H1 (cell line): ENCODE measurements at regions of chr12 and their contacts with region 1.

Region 1: DNA sequence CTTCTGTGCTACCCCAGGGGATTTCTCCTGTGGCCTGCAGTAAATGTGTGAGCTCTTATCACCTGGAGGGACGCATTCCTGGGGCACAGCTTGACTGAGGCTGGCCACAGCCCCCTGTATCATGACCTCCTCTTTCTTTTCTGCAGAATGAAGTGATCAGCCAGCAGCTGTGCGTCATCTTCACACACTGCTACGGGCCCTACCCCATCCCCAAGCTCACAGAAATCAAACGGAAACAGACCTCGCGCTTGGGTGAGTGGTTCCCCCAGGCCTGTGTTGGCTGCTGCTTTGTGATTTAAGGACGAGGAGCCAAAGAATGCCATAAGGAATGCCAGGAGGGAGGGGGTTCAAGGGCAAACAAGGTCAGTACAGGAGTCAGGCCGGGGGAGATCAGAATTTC is 50.5 kb upstream of the PWP1 start:
- DNase-seq: peak; percentile 61 to 72
- H3K4me3 ChIP-seq: peak overlapping the region in 1 of 4 experiments; percentile 36; a peak in 2 of 8 replicates
- H3K27ac ChIP-seq: peak overlapping the region; percentile 70
- H3K4me1 ChIP-seq: peaks cover 6 to 20% (median 18%) of the 10 kb centered on the region in 4 experiments
- H3K27me3 ChIP-seq: no peaks in the 10 kb centered on the region
- CTCF ChIP-seq: no peak
- EP300 ChIP-seq: peak in 1 of 2 experiments; percentile 17; a peak in 1 of 3 replicates
- POLR2A ChIP-seq: peak; percentile 56 to 83
- RAD21 ChIP-seq: no peak

Region 2: DNA sequence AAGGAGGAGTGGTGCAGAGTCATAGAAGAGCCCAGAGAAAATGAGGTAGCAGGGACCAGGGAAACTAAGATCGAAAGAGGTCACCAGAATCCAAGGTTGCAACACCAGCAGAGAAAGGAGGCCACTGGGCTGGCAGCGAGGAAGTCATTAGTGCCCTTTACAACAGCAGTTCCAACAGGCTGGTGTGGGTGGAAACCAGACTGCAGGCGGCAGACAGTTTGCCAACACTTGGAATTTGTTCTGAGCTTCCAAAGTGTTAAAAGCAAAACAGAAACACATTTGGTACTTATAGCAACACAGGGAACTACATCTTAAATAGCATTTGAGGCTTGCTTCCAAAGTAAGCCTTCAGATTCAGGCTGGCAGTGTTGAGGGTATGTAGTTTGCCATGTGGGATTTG is 44.7 kb before region 1 on chr12:
- CTCF ChIA-PET with region 1: no interaction called
- POLR2A ChIA-PET with region 1: no interaction called
- DNase-seq: no peak
- H3K4me3 ChIP-seq: no peak overlapping the region
- H3K27ac ChIP-seq: no peak overlapping the region
- H3K4me1 ChIP-seq: peaks cover 1 to 5% (median 3%) of the 10 kb centered on the region in 4 experiments; a peak in 4 of 7 replicates
- H3K27me3 ChIP-seq: no peaks in the 10 kb centered on the region
- CTCF ChIP-seq: no peak
- EP300 ChIP-seq: no peak
- POLR2A ChIP-seq: no peak
- RAD21 ChIP-seq: no peak

Region 3: DNA sequence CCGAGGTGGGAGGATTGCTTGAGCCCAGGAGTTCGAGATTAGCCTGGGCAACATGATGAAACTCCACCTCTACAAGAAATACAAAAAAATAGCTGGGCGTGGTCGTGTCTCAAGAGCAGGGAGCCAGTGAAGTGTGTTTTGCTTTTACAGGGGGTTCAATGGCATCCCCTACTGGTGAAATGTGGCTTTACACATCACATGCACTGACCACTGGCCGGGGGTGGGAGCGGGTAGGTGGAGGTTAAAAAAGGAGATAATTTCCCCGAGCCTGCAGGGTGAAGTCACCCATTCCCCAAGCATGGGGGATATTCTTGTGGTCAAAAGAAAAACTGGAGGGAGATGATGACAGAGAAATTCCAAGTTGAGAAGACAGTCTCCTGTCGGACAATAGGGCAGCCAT is 13.1 kb before region 1 on chr12:
- CTCF ChIA-PET with region 1: interaction called, 18 read pairs
- POLR2A ChIA-PET with region 1: interaction called, 9 read pairs
- DNase-seq: peak in 1 of 2 experiments; percentile 80
- H3K4me3 ChIP-seq: no peak overlapping the region
- H3K27ac ChIP-seq: no peak overlapping the region
- H3K4me1 ChIP-seq: no peaks in the 10 kb centered on the region
- H3K27me3 ChIP-seq: no peaks in the 10 kb centered on the region
- CTCF ChIP-seq: peak; percentile 75 to 85 (median 76)
- EP300 ChIP-seq: no peak
- POLR2A ChIP-seq: no peak
- RAD21 ChIP-seq: peak; percentile 69 to 79

Region 4: DNA sequence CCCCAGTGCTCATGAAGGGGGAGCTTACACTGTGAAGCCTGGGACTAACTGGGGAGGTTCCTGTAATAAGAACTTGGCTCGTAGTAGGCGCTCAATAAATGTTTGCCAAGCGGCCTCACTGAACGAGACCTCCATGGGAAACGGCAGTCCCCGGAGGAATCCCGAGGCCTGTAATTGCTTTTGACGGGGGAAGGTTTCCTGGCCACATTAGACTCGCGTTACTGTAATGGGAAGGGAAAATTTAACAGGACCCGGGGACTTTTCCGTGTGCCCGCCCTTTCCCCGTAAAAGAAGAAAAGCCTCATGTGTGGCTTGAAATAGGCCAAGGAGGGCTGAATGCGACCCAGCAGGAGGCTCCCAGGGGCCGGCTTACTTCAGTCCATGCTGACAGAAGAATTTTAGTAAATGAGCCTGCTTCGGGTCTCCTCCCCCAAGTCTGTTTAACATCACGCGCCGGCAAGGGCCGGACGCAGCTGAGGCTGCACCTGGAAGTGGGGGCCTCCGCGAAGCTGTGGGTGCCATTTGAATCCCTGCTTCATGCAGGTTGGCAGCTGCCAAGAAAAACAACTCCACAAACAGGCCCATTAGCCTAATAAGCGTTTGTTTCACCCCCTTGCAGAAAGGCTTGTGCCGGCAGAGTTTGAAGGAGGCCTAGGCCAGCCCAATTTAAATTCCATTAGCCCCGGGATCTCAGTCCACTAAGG is 10.6 kb after region 1 on chr12:
- CTCF ChIA-PET with region 1: interaction called, 3 read pairs
- POLR2A ChIA-PET with region 1: interaction called, 46 read pairs
- DNase-seq: peak in 1 of 2 experiments; percentile 77
- H3K4me3 ChIP-seq: peak overlapping the region in 1 of 4 experiments; percentile 29; a peak in 3 of 8 replicates
- H3K27ac ChIP-seq: peak overlapping the region; percentile 79
- H3K4me1 ChIP-seq: peaks cover 13 to 21% (median 14%) of the 10 kb centered on the region in 4 experiments
- H3K27me3 ChIP-seq: no peaks in the 10 kb centered on the region
- CTCF ChIP-seq: peak in 1 of 3 experiments; percentile 2; a peak in 1 of 4 replicates
- EP300 ChIP-seq: no peak; a peak in 1 of 3 replicates
- POLR2A ChIP-seq: peak in 1 of 2 experiments; percentile 63; a peak in 1 of 3 replicates
- RAD21 ChIP-seq: peak in 1 of 2 experiments; percentile 6; a peak in 1 of 4 replicates

Region 5: GRCh38 chr12:107736914-107737313 is 101.8 kb after region 1 on chr12:
- CTCF ChIA-PET with region 1: no interaction called
- POLR2A ChIA-PET with region 1: no interaction called
- DNase-seq: no peak
- H3K4me3 ChIP-seq: no peak overlapping the region
- H3K27ac ChIP-seq: no peak overlapping the region
- H3K4me1 ChIP-seq: no peaks in the 10 kb centered on the region
- H3K27me3 ChIP-seq: no peaks in the 10 kb centered on the region
- CTCF ChIP-seq: no peak
- EP300 ChIP-seq: no peak
- POLR2A ChIP-seq: no peak
- RAD21 ChIP-seq: no peak

Region 6: GRCh38 chr12:107760809-107761501 is 125.8 kb after region 1 on chr12 and contains the start of gene PRDM4:
- CTCF ChIA-PET with region 1: no interaction called
- POLR2A ChIA-PET with region 1: no interaction called
- DNase-seq: peak; percentile 81 to 90
- H3K4me3 ChIP-seq: peak within 1 kb of the TSS; percentile 77 to 87 (median 82)
- H3K27ac ChIP-seq: peak within 1 kb of the TSS; percentile 68
- H3K4me1 ChIP-seq: peaks cover 0 to 8% (median under 1%) of the 10 kb centered on the region in 4 experiments; a peak in 3 of 7 replicates
- H3K27me3 ChIP-seq: no peaks in the 10 kb centered on the region
- CTCF ChIP-seq: peak; percentile 62 to 85 (median 62)
- EP300 ChIP-seq: 0 out of 3 replicates have a peak, but pooled peaks of 1 of the 2 experiments have one; percentile 12
- POLR2A ChIP-seq: peak in 1 of 2 experiments; percentile 58; a peak in 1 of 3 replicates
- RAD21 ChIP-seq: peak; percentile 67 to 93
- total RNA-seq, gene PRDM4: 17.2 and 17.5 TPM in 2 replicates